Caco-2 (cell line): ENCODE measurements at regions of chr7 and their contacts with region 1.

Region 1: GRCh38 chr7:94087664-94088352 is 83.7 kb upstream of the BET1 start:
- DNase-seq: peak; percentile 54 to 60
- H3K4me3 ChIP-seq: no peak overlapping the region
- H3K4me3 Mint-ChIP-seq: no peak overlapping the region
- H3K27ac Mint-ChIP-seq: no peak overlapping the region
- H3K4me1 ChIP-seq: no peaks in the 10 kb centered on the region
- H3K4me1 Mint-ChIP-seq: no peaks in the 10 kb centered on the region
- H3K27me3 ChIP-seq: peaks cover 2% of the 10 kb centered on the region; the same call in 1 of the 2 replicates
- H3K27me3 Mint-ChIP-seq: peaks cover 28% of the 10 kb centered on the region
- CTCF ChIP-seq: peak; percentile 53 to 88

Region 2: GRCh38 chr7:93622036-93623033 is 465.5 kb before region 1 on chr7:
- CTCF ChIA-PET with region 1: no interaction called
- POLR2A ChIA-PET with region 1: no interaction called
- intact Hi-C with region 1: loop called (anchors 1 kb)
- DNase-seq: peak; percentile 40 to 42
- H3K4me3 ChIP-seq: no peak overlapping the region
- H3K4me3 Mint-ChIP-seq: no peak overlapping the region
- H3K27ac Mint-ChIP-seq: no peak overlapping the region
- H3K4me1 ChIP-seq: no peaks in the 10 kb centered on the region
- H3K4me1 Mint-ChIP-seq: peaks cover 6% of the 10 kb centered on the region
- H3K27me3 ChIP-seq: no peaks in the 10 kb centered on the region
- H3K27me3 Mint-ChIP-seq: no peaks in the 10 kb centered on the region
- CTCF ChIP-seq: peak; percentile 54 to 71

Region 3: DNA sequence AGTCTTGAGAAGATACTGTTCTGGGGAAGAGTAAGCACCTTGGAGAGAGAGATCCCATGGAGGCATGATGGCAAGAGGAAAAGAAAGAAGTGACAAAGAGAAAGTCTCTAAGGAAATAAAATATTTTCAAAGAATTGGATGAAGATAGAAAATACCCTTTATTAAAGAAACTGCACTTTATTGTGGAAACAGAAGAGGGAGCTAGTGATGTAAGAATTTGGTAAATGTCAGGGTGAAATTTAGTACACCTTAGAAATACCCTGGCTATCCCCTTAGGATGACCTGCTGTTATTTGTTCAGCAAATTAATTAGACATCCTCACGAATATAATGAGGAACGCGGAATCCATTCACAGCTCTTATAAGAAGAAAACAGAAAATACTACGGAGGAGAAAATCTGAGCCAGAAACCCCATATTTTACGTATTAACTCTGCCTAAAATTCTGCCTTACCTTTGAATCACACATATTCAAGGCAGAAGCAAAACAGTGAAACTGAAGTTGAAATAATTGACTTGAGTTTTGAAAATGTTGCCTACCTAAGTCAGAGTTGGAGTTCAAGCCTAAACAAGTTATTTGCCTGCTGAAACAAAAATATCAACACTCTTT is 288.0 kb before region 1 on chr7:
- CTCF ChIA-PET with region 1: no interaction called
- POLR2A ChIA-PET with region 1: no interaction called
- intact Hi-C with region 1: loop called (anchors 1 kb)
- DNase-seq: no peak
- H3K4me3 ChIP-seq: no peak overlapping the region
- H3K4me3 Mint-ChIP-seq: no peak overlapping the region
- H3K27ac Mint-ChIP-seq: no peak overlapping the region
- H3K4me1 ChIP-seq: no peaks in the 10 kb centered on the region
- H3K4me1 Mint-ChIP-seq: no peaks in the 10 kb centered on the region
- H3K27me3 ChIP-seq: no peaks in the 10 kb centered on the region
- H3K27me3 Mint-ChIP-seq: peaks cover 3% of the 10 kb centered on the region
- CTCF ChIP-seq: peak; percentile 32 to 36

Region 4: DNA sequence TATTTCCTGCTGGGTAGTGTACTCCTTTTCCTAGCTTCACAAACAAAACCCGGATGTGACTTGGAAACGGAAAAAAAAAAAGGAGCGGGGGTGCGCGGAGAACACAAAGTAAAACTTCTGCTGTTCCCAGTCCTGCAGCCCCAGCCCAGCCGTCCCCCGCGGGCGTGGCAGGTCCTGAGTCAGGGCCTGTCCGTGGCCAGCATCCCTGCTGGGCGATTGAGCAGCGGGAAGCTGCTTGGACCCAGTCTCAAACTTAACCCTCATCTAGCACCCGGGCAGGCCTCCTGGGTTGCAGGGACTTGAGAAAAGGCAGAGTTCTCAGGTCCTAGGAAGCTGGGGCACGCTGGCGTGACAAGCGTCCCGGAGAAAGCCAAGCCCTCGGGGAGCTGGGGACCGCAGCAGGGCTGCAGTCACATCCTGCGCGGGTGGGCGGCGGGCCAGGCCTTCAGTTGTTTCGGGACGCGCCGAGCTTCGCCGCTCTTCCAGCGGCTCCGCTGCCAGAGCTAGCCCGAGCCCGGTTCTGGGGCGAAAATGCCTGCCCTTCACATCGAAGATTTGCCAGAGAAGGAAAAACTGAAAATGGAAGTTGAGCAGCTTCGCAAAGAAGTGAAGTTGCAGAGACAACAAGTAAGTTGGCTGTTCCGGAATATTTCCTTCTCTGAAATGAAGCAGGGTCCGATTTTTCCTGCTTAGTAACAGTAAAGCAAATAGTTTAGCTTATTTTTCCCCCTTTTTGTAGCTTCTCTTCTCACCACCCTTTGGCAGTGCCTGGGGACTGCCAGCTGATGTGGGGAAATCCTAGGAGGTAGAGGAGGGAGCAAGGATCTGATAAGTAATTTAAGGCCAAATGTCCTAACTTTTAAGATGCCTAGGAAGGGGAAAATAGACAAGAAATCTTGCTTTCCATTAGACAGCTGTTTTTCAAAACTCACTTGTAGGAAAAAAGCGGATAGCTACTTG is 165.9 kb before region 1 on chr7 and contains the start of gene GNG11:
- CTCF ChIA-PET with region 1: no interaction called
- POLR2A ChIA-PET with region 1: no interaction called
- intact Hi-C with region 1: no loop called
- DNase-seq: no peak
- H3K4me3 ChIP-seq: peak within 1 kb of the TSS; percentile 4; the same call in 1 of the 2 replicates
- H3K4me3 Mint-ChIP-seq: no peak within 1 kb of the TSS
- H3K27ac Mint-ChIP-seq: no peak within 1 kb of the TSS
- H3K4me1 ChIP-seq: no peaks in the 10 kb centered on the region
- H3K4me1 Mint-ChIP-seq: no peaks in the 10 kb centered on the region
- H3K27me3 ChIP-seq: no peaks in the 10 kb centered on the region
- H3K27me3 Mint-ChIP-seq: peaks cover 8% of the 10 kb centered on the region
- CTCF ChIP-seq: no peak
- total RNA-seq, gene GNG11: not detected in 2 replicates

Region 5: GRCh38 chr7:94004024-94004951 is 83.5 kb before region 1 on chr7 and contains the start of gene BET1:
- CTCF ChIA-PET with region 1: no interaction called
- POLR2A ChIA-PET with region 1: no interaction called
- intact Hi-C with region 1: loop called (anchors 5 kb)
- DNase-seq: peak; percentile 91
- H3K4me3 ChIP-seq: peak within 1 kb of the TSS; percentile 93
- H3K4me3 Mint-ChIP-seq: peak within 1 kb of the TSS; percentile 100
- H3K27ac Mint-ChIP-seq: peak within 1 kb of the TSS; percentile 100
- H3K4me1 ChIP-seq: peaks cover 5% of the 10 kb centered on the region; the same call in 1 of the 2 replicates
- H3K4me1 Mint-ChIP-seq: peaks cover 10% of the 10 kb centered on the region
- H3K27me3 ChIP-seq: no peaks in the 10 kb centered on the region
- H3K27me3 Mint-ChIP-seq: peaks cover 13% of the 10 kb centered on the region
- CTCF ChIP-seq: no peak
- total RNA-seq, gene BET1: 19.9 TPM in 2 replicates